K562 (cell line): ENCODE measurements at regions of chr4 and their contacts with region 1.

Region 1: GRCh38 chr4:128191115-128191781 is 96.4 kb downstream of the PGRMC2 start:
- DNase-seq: peak; percentile 65 to 77 (median 66)
- ATAC-seq: peak; percentile 99
- H3K4me3 ChIP-seq: no peak overlapping the region
- H3K27ac ChIP-seq: no peak overlapping the region
- H3K4me1 ChIP-seq: no peaks in the 10 kb centered on the region
- H3K27me3 ChIP-seq: no peaks in the 10 kb centered on the region
- CTCF ChIP-seq: peak; percentile 75 to 92 (median 87)
- EP300 ChIP-seq: no peak
- POLR2A ChIP-seq: no peak
- RAD21 ChIP-seq: peak; percentile 86 to 88

Region 2: DNA sequence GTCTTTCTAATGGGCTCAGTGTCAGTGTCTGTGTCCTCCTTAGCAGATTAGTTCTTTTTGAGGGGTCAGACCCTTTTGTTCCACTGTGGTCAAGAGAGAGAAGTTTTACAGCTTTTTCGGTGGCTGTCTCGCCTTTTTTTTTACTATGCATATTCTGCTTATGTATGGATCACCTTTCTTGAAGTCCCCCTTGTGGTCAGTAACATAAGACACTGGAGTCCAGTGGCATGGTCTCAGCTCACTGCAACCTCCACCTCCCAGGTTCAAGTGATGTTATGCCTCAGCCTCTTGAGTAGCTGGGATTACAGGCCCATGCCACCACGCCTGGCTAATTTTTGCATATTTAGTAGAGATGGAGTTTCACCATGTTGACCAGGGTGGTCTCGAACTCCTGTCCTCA is 150.4 kb after region 1 on chr4:
- CTCF ChIA-PET with region 1: no interaction called
- POLR2A ChIA-PET with region 1: no interaction called
- in situ Hi-C with region 1: no loop called
- intact Hi-C with region 1: loop called (anchors 5 kb)
- DNase-seq: peak in 1 of 4 experiments; percentile 50
- ATAC-seq: peak; percentile 92
- H3K4me3 ChIP-seq: no peak overlapping the region
- H3K27ac ChIP-seq: no peak overlapping the region
- H3K4me1 ChIP-seq: peaks cover 0 to 12% of the 10 kb centered on the region in 2 experiments; a peak in 2 of 5 replicates
- H3K27me3 ChIP-seq: no peaks in the 10 kb centered on the region
- CTCF ChIP-seq: peak; percentile 22 to 44 (median 33); a peak in 3 of 6 replicates
- EP300 ChIP-seq: no peak
- POLR2A ChIP-seq: no peak
- RAD21 ChIP-seq: peak in 1 of 2 experiments; percentile 15; a peak in 1 of 4 replicates

Region 3: GRCh38 chr4:128379860-128380259 is 188.6 kb after region 1 on chr4:
- CTCF ChIA-PET with region 1: no interaction called
- POLR2A ChIA-PET with region 1: no interaction called
- in situ Hi-C with region 1: no loop called
- intact Hi-C with region 1: loop called (anchors 2 kb)
- DNase-seq: peak; percentile 49 to 68 (median 57)
- ATAC-seq: peak; percentile 98
- H3K4me3 ChIP-seq: no peak overlapping the region
- H3K27ac ChIP-seq: no peak overlapping the region
- H3K4me1 ChIP-seq: no peaks in the 10 kb centered on the region
- H3K27me3 ChIP-seq: no peaks in the 10 kb centered on the region
- CTCF ChIP-seq: peak; percentile 63 to 78 (median 75)
- EP300 ChIP-seq: no peak
- POLR2A ChIP-seq: no peak
- RAD21 ChIP-seq: peak; percentile 43 to 56

Region 4: DNA sequence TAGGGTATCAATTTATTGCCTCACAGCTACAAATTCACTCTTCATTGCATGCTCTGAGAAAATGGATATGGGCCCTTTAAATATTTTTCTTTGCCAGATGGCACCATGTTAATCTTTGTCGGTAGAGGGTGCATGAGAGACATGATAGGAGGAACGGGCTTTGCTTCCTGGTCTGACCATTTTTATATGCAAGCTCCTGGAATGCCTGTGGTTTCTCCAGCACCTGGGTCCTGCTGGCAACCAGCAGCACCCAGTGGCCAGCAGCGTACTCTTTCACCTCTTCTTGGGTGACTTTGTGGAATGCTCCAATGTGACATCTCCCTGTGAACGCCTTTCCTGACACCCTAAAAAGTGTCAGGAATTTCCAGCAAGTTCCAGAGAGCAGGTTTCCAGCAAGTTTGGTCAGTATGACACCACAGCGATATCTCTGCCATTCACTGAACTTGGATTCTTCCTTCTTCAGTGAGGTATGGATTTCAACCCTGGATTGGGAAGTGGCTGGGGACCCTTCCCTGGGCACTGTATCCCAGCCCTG is 236.7 kb after region 1 on chr4:
- CTCF ChIA-PET with region 1: no interaction called
- POLR2A ChIA-PET with region 1: no interaction called
- in situ Hi-C with region 1: no loop called
- intact Hi-C with region 1: loop called (anchors 2 kb)
- DNase-seq: peak; percentile 33 to 72 (median 54)
- ATAC-seq: peak; percentile 98
- H3K4me3 ChIP-seq: no peak overlapping the region
- H3K27ac ChIP-seq: no peak overlapping the region
- H3K4me1 ChIP-seq: no peaks in the 10 kb centered on the region; a peak in 1 of 5 replicates
- H3K27me3 ChIP-seq: no peaks in the 10 kb centered on the region
- CTCF ChIP-seq: peak; percentile 67 to 85 (median 74)
- EP300 ChIP-seq: no peak
- POLR2A ChIP-seq: no peak
- RAD21 ChIP-seq: peak; percentile 67 to 82

Region 5: DNA sequence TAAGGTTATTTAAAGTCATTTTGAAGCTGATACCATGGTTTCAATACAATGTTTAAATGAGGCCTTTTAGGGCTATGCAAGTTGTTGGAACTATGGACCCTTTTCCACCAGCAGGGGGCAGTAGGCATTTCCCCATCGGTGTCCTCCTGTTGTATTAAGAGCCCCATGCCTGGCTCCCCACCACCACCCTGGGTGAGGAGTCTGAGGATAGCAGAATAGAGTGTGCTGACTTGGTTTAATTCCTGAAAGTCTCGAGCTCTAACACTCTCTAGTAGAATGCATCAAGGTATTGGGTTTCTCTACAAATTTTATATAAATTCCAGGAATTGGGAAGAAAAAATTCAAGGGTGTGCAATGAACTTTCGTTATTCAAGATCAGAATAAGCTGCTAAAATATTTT is 383.5 kb after region 1 on chr4:
- CTCF ChIA-PET with region 1: no interaction called
- POLR2A ChIA-PET with region 1: no interaction called
- in situ Hi-C with region 1: loop called (anchors 10 kb)
- intact Hi-C with region 1: loop called (anchors 5 kb)
- DNase-seq: peak; percentile 79 to 89 (median 80)
- ATAC-seq: peak; percentile 96
- H3K4me3 ChIP-seq: no peak overlapping the region
- H3K27ac ChIP-seq: no peak overlapping the region
- H3K4me1 ChIP-seq: peaks cover 6 to 8% of the 10 kb centered on the region in 2 experiments; a peak in 3 of 5 replicates
- H3K27me3 ChIP-seq: no peaks in the 10 kb centered on the region
- CTCF ChIP-seq: peak; percentile 75 to 90 (median 85)
- EP300 ChIP-seq: peak; percentile 11; the same call in 1 of the 2 replicates
- POLR2A ChIP-seq: no peak
- RAD21 ChIP-seq: peak; percentile 84

Region 6: GRCh38 chr4:128589384-128589965 is 398.2 kb after region 1 on chr4:
- CTCF ChIA-PET with region 1: no interaction called
- POLR2A ChIA-PET with region 1: no interaction called
- in situ Hi-C with region 1: no loop called
- intact Hi-C with region 1: no loop called
- DNase-seq: no peak
- ATAC-seq: no peak
- H3K4me3 ChIP-seq: no peak overlapping the region
- H3K27ac ChIP-seq: no peak overlapping the region
- H3K4me1 ChIP-seq: no peaks in the 10 kb centered on the region; a peak in 2 of 5 replicates
- H3K27me3 ChIP-seq: no peaks in the 10 kb centered on the region
- CTCF ChIP-seq: no peak
- EP300 ChIP-seq: no peak
- POLR2A ChIP-seq: no peak
- RAD21 ChIP-seq: no peak